ENCODE measurements at regions of chr4 and their contacts with region 1.

Region 1: GRCh38 chr4:81069706-81070331 is 39.3 kb downstream of the BMP3 start:
- ATAC-seq: peak; percentile 85 to 99 (median 98)
- H3K4me3 ChIP-seq: no peak overlapping the region
- H3K27ac ChIP-seq: no peak overlapping the region
- H3K4me1 ChIP-seq: no peaks in the 10 kb centered on the region

Region 2: DNA sequence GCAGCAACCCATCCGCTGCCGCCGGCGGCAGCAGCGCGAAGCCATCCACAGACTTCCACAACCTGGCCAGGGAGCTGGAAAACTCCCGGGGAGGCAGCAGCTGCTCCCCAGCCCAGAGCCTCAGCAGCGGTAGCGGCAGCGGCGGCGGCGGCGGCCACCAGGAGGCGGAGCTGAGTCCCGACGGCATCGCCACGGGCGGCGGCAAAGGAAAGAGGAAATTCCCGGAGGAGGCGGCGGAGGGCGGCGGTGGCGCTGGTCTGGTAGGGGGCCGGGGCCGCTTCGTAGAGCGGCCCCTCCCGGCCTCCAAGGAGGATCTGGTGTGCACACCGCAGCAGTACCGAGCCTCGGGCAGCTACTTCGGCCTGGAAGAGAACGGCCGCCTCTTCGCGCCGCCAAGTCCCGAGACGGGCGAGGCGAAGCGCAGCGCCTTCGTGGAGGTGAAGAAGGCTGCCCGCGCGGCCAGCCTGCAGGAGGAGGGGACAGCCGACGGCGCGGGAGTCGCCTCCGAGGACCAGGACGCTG is 867.6 kb before region 1 on chr4:
- in situ Hi-C with region 1: loop called in 1 of 9 experiments (anchors 25 kb)
- ATAC-seq: peak; percentile 42 to 81 (median 68)
- H3K4me3 ChIP-seq: peak overlapping the region; percentile 20 to 94 (median 43)
- H3K27ac ChIP-seq: peak overlapping the region; percentile 74 to 77
- H3K4me1 ChIP-seq: peaks cover 5 to 17% of the 10 kb centered on the region in 2 donors

Region 3: DNA sequence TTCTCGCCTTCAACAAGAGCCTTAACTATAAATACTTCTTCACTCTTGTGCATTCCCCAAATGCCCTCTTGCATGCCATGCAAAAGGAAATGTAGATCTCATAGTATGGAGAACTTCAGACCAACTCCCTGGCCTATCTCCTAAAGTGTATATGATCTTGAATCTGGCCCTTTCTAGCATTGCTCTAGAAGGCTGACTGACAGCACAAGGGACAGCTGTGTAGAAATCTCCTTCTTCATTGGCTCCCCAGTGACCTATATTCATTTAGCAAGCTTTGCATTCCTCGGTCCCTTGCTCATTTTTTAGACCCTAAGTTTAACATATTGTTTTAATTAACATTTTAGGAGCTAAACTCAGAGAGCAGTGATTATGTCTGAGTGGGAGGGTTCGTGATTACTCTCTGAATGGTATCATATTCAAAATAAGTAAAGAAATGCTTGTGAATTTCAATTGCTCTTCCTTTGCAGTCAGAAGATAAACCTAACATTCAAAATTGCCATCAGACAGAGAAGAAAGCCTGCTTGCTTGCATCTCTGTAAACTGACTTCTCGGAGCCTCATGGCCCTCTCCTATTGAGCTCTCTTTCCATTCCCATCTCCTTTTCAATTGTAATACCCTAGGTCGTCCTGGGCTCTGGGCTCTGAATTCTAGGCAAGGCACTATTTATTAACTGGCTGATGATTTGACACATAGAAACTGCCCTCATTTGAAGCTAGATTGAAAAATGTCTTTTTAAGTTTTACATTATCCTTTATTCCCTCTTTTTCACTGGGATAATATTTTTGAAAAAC is 265.5 kb after region 1 on chr4:
- in situ Hi-C with region 1: loop called in 1 of 9 experiments (anchors 25 kb)
- ATAC-seq: peak in 2 of 8 experiments; percentile 47 to 51
- H3K4me3 ChIP-seq: no peak overlapping the region
- H3K27ac ChIP-seq: no peak overlapping the region
- H3K4me1 ChIP-seq: no peaks in the 10 kb centered on the region

Region 4: DNA sequence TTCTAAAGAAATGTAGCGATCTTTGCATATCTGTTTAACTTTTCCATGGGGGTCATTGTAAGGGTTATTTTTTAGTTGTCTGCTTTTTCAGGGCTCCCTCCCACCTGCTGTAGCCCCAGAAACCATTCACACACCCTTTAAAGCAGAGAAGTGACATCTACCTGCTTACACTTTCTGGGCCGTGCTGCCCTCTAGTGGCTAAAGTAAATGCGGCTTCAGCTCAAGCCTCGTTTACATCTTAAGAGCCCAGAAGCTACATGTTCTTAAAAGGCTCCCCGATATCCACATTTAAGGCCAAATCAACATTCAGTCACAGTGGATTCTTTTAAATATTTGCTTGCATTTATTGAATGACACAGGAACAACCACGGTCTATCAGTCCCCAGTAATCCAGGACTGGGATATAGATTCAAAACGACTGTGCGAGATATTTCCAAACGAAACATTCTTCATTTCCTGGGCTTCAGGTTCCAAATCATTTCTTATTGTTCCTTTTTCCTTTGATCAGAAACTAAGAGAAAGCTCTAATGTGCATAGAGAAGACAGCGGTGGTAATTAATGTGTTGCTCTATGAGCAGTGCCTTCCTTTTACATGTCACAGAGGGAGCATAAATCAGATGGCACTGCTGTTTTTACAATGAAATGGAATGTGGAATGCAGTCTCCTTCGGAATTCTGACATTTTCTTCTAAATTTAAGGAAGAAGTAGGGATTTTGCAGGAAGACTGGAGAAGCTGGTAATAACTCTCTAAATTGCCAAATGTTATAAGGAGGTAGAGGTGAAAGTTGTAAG is 282.0 kb after region 1 on chr4:
- in situ Hi-C with region 1: loop called in 5 of 9 experiments (anchors 10 to 25 kb)
- ATAC-seq: peak; percentile 77 to 92 (median 84)
- H3K4me3 ChIP-seq: no peak overlapping the region
- H3K27ac ChIP-seq: no peak overlapping the region
- H3K4me1 ChIP-seq: peaks cover 9 to 34% of the 10 kb centered on the region in 2 donors

Measured in motor neuron (in vitro differentiated cells).